Activated naive CD4-positive, alpha-beta T cell treated with anti-CD3 and anti-CD28 coated beads for 36 hours (primary cell): ENCODE measurements at regions of chr5 and their contacts with region 1.

Region 1: GRCh38 chr5:174327317-174328236 is 282.1 kb downstream of the NSG2 start:
- DNase-seq: peak; percentile 76
- H3K4me3 Mint-ChIP-seq: no peak overlapping the region
- H3K27ac Mint-ChIP-seq: peak overlapping the region; percentile 31
- H3K4me1 Mint-ChIP-seq: no peaks in the 10 kb centered on the region
- H3K27me3 Mint-ChIP-seq: peaks cover 22% of the 10 kb centered on the region

Region 2: DNA sequence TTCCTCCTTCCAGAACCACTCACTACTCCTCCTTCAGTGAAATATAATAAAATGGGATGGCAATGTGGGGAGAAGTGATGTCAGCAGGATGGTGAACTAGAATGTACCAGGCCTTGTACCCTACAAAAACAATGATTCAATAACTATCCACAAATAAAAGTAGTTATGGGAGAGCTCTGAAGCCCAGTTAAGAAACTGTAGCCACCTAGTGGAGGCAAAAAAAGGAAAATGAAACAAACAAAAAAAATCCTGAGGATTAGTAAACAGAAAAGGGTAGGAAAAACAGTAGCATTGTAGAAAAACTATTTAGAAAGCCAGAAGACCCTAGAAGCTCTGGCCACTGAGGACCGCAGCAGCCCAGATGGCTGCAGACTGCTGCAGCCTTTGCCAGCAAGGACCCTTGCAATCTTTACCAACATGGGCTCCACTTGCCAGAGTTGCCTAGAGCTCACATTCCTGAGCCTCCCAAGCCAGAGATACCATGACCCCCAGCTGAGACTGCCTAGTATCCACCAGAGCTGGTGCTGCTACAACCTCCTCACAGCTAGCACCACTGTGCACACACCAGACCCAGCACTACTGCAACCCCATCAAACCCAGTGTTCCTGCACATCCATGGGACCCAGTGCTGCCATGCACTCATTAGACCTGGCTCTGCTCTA is 137.1 kb after region 1 on chr5:
- CTCF ChIA-PET with region 1: no interaction called
- intact Hi-C with region 1: no loop called
- DNase-seq: no peak
- H3K4me3 Mint-ChIP-seq: no peak overlapping the region
- H3K27ac Mint-ChIP-seq: no peak overlapping the region
- H3K4me1 Mint-ChIP-seq: peaks cover 3% of the 10 kb centered on the region
- H3K27me3 Mint-ChIP-seq: peaks cover 9% of the 10 kb centered on the region

Region 3: DNA sequence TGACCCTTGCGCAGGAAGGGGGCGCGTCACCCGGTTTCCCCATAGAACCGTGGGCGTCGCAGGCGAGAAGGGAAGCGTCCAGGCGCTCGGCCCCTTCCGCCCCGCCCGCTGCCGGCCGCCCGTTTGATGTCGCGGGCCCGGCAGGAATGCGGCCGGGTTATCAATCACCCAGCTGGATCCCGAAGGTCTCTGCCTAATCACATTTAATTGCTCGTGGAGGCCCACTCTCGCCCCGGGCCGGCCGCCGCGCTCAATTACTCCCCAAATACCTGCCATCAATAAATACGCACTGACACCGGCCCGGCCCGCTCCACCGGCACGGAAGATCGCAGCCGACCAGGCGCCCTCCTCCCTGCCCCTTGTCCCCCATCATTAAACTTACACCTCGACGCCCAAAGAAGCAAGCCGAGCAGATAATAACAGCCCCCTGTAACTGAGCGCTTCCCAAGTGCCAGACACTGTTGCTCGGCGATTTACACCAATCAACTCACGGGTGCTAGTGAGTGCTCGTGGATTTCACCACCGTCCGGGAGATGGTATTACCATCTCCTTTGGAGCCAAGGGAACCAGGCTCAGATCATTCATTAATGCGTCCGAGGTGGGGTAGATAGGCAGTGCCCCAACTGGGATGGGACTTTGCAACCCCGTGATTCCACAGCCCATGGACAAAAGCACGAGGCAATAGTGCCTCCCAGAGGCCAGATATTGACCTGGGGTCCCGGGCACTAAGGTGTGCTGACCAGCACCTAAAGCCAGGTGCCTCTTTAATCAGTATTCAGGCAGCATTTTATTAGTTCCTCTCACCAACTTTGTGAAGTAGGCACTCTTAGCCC is 408.1 kb after region 1 on chr5:
- CTCF ChIA-PET with region 1: no interaction called
- intact Hi-C with region 1: loop called (anchors 10 kb)
- DNase-seq: peak; percentile 26
- H3K4me3 Mint-ChIP-seq: no peak overlapping the region
- H3K27ac Mint-ChIP-seq: peak overlapping the region; percentile 18
- H3K4me1 Mint-ChIP-seq: peaks cover 14% of the 10 kb centered on the region
- H3K27me3 Mint-ChIP-seq: peaks cover 72% of the 10 kb centered on the region

Region 4: DNA sequence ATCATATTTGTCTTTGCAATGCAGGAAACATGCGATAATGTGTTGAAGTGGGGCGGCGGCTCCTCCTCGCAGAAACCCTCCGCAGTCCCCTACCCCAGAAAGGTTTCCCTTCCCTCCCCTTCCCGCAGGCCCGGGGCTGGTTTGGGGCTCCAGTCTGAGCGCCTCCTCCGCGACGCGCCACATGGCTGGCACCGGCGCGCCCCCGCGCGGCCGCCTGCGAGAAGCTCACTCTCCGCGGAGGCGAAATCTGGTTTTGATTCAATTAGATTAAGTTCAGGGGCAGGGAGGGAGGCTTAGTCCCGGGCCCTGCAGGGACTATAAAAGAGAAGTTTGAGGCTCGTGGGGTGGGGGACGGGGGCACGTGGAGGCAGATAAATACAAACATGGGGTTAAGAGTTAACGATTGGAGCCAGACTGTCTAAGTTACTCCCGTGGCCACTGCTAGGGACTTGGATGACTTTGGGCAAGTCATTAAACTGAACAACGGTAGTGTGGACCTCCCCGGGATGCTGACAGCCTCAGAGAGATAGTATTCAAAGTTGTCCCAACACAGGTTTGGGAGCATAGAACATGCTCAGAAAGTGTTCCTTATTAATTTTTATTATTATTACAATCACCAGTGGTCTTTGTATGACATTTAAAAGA is 466.2 kb after region 1 on chr5:
- CTCF ChIA-PET with region 1: interaction called, 4 read pairs
- intact Hi-C with region 1: loop called (anchors 1 kb)
- DNase-seq: peak; percentile 59
- H3K4me3 Mint-ChIP-seq: no peak overlapping the region
- H3K27ac Mint-ChIP-seq: no peak overlapping the region
- H3K4me1 Mint-ChIP-seq: peaks cover 2% of the 10 kb centered on the region
- H3K27me3 Mint-ChIP-seq: peaks cover 49% of the 10 kb centered on the region